ENCODE measurements at regions of chr9 and their contacts with region 1.

Region 1: DNA sequence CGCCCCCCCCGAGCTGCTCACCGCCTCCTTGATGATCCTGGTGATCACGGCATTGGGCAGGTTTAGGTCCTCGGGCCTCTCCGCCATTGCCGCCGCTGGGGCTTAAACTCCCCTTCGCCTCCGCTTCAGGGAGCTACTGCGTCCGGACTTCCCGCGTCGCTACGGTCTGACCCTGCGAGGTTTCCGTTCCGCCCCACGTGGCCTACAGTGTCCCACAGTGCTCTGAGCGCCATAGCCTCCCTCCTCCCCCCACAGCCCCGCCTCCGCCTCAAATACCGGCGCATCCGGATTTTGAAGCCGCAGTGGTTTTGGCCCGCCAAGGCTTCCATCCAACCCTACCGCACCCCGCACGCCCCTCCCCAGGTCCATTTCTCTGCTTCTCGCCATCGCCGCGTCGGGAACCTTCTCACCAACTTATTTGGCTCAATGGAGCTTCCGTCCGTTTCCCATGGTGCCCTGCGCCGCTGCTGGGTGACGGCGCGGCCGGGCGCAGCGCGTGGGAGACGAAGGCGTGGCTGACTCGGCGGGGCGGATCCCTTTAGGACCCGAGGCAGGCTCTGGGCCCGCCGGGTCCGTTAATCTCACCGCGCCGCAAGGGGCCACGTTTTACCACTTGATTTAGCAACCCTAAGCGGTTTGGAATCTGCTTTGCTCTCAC is at the starts of genes C9orf43 and POLE3:
- DNase-seq: peak; percentile 97
- ATAC-seq: peak; percentile 96
- H3K4me3 Mint-ChIP-seq: peak within 1 kb of the TSS; percentile 96
- H3K27ac Mint-ChIP-seq: peak within 1 kb of the TSS; percentile 100
- H3K4me1 Mint-ChIP-seq: peaks cover 18% of the 10 kb centered on the region
- H3K27me3 Mint-ChIP-seq: no peaks in the 10 kb centered on the region
- total RNA-seq, gene C9orf43: 0.36 to 0.54 TPM
- total RNA-seq, gene POLE3: 51.7 to 52.2 TPM

Region 2: DNA sequence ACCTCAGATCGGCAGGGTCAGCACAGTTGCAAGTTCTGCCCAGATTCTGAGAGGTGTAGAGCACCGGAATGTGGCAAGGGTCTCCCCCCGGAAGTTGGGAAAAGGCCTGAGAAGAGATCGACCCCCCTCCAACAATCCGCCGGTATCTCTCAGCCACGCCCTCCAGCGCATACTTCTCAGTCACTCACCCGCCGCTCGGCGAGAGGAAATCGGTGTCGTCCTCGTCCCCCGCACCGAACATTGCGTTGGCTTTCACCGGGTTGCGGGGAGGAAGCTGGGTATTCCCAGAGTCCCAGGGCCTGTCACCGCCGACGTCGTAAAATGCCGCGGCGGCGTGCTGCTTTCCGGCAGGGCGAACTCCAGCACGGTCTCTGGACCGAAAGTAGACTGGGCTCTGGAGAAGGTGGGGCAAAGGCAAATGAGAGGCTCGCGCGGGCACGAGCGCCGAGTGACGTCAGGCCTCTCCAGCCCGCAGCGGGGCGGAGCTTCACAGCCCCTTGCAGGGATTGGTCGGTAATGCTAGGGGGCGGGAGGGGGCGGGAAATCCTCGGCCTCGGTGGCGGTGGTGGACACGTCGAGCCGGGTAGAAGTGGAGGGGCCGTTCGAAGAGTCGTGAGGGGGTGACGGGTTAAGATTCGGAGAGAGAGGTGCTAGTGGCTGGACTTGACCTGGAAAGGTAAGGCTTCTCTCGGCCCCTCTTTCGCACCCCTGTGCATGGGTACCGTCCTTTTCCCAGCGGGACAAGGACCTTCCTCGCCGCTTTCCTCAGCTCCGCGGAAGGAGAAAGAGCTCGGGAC is 189.1 kb before region 1 on chr9 and contains the starts of genes FKBP15 and SLC31A1:
- POLR2A ChIA-PET with region 1: interaction called, 10 read pairs
- DNase-seq: peak; percentile 95
- ATAC-seq: peak; percentile 98
- H3K4me3 Mint-ChIP-seq: peak within 1 kb of the TSS; percentile 86
- H3K27ac Mint-ChIP-seq: peak within 1 kb of the TSS; percentile 71
- H3K4me1 Mint-ChIP-seq: peaks cover 36% of the 10 kb centered on the region
- H3K27me3 Mint-ChIP-seq: no peaks in the 10 kb centered on the region
- total RNA-seq, gene FKBP15: 37.4 to 40.7 TPM
- total RNA-seq, gene SLC31A1: 8.8 to 9.3 TPM

Region 3: DNA sequence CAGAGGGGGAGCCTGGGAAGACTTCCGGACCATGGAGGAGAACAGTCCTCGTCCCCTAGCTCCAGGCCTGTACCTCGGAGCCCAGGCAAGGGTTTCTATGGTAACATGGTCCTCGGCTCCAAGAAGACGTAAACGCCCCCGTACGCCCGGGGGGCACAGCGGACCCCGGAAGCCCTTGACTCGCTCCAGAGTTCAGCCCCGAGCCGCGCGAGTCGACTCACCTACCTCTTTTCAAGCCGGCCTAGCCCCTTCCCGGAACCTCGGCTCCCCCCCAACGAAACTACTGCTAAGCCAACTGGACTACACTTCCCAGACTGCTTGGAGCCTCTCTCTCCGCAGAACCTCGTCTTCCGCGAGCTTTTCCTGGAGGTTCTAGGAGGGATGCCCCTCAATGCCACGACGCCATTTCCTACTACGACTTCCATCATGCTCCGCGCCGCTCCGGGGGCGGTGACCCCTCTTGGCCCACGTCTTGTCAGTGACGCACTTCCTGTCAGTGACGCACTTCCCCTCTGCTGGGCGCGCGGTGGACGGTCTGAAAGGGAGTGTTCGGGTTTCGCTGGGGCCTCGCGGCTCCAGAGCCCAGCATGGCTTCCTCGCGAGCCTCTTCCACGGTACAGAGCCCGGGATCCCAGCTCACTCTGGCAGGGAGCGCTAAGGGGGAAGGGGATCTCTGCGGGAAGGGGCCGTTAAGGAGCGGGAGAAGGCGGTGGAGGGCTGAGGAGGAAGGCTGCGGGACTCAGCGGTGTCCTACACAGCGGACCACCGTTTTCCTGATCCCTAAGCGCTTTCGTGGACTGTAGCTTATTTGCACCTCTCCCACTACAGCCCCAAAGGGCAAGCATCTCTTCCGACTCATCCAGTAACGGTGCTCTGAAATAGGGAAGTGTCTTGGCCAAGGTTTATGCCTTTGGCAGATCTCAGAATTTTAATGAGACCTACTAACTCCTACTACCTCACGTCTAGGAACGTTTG is 134.9 kb before region 1 on chr9 and contains the starts of genes CDC26 and PRPF4:
- POLR2A ChIA-PET with region 1: interaction called, 25 read pairs
- DNase-seq: peak; percentile 94
- ATAC-seq: peak; percentile 94
- H3K4me3 Mint-ChIP-seq: no peak within 1 kb of the TSS
- H3K27ac Mint-ChIP-seq: no peak within 1 kb of the TSS
- H3K4me1 Mint-ChIP-seq: peaks cover 22% of the 10 kb centered on the region
- H3K27me3 Mint-ChIP-seq: no peaks in the 10 kb centered on the region
- total RNA-seq, gene CDC26: 27.5 to 28.9 TPM
- total RNA-seq, gene PRPF4: 31.1 to 31.8 TPM

Region 4: GRCh38 chr9:113349445-113350094 is 60.8 kb before region 1 on chr9 and contains the start of gene BSPRY:
- POLR2A ChIA-PET with region 1: interaction called, 19 read pairs
- DNase-seq: peak; percentile 80
- ATAC-seq: peak; percentile 65
- H3K4me3 Mint-ChIP-seq: peak within 1 kb of the TSS; percentile 93
- H3K27ac Mint-ChIP-seq: peak within 1 kb of the TSS; percentile 90
- H3K4me1 Mint-ChIP-seq: peaks cover 31% of the 10 kb centered on the region
- H3K27me3 Mint-ChIP-seq: no peaks in the 10 kb centered on the region
- total RNA-seq, gene BSPRY: 9.6 to 10.6 TPM

Region 5: GRCh38 chr9:113386571-113387393 is 23.6 kb before region 1 on chr9:
- POLR2A ChIA-PET with region 1: no interaction called
- DNase-seq: no peak
- ATAC-seq: no peak
- H3K4me3 Mint-ChIP-seq: no peak overlapping the region
- H3K27ac Mint-ChIP-seq: no peak overlapping the region
- H3K4me1 Mint-ChIP-seq: no peaks in the 10 kb centered on the region
- H3K27me3 Mint-ChIP-seq: peaks cover 2% of the 10 kb centered on the region

Region 6: DNA sequence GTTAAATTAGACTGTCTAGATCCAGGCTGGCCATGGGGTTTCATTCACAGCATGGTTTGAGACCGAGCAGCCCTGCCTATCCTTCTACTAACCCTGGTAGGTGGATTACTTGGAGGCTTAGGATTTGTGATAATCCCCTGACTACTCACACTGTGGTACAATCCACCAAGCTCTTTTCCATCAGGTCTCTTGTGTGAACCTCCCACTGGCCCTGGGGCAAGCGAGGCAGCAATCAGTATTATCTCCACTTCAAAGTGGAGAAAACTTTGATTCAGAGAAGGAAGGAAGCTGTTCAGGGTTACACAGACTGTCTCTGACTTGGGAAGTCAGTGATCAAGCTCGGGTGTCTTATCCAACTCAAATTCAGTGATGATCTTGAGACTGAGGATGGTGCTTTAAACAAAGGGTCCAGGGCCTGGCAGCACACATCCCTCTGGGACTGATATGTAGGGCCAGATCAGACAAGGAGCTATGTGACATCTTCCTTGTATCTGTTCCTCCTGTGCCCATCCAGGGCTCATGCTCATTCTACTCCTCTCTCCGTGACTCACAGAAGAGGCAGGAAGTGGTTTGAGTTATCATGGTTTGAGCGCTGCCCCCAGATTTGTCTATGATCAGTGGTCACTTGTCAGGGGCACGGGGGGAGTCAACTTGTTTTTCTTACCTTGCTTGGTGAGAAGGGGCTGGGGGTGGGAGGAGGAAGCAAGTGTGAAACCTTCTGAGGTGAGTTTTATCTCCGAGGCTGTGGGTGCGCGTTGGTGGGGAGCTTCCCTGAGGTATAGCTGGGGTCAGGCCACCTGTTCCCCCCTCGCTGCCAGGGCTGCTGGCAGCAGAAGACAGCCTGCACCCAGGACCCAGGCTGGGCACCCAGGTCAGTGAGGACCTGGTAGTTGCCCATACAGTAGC is 101.8 kb after region 1 on chr9:
- POLR2A ChIA-PET with region 1: interaction called, 13 read pairs
- DNase-seq: peak; percentile 75
- ATAC-seq: peak; percentile 73
- H3K4me3 Mint-ChIP-seq: peak overlapping the region; percentile 81
- H3K27ac Mint-ChIP-seq: peak overlapping the region; percentile 98
- H3K4me1 Mint-ChIP-seq: peaks cover 68% of the 10 kb centered on the region
- H3K27me3 Mint-ChIP-seq: no peaks in the 10 kb centered on the region

Region 7: DNA sequence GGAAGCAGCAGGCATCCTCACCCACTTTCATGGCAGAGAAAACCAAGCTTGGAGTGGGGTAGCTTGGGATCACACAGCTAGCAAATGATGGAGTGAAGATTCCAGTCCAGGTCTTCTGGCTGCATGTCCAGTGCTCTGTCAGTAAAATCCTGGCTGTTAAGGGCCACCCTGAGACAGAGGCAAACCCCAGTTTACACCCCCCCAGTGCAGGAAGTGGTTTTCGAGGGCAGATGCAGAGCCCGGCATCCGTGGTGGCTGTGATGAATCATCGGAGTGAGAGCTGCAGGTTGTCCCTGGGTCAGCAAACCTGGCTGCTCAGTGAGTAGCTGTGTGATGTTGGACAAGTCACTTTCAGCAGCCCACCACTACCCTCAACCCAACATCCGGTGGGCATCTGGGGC is 168.5 kb after region 1 on chr9:
- POLR2A ChIA-PET with region 1: interaction called, 15 read pairs
- DNase-seq: peak; percentile 86
- ATAC-seq: peak; percentile 64
- H3K4me3 Mint-ChIP-seq: peak overlapping the region; percentile 86
- H3K27ac Mint-ChIP-seq: peak overlapping the region; percentile 95
- H3K4me1 Mint-ChIP-seq: peaks cover 69% of the 10 kb centered on the region
- H3K27me3 Mint-ChIP-seq: no peaks in the 10 kb centered on the region